Activated CD4-positive, alpha-beta memory T cell treated with anti-CD3 and anti-CD28 coated beads for 36 hours (primary cell): ENCODE measurements at regions of chr7 and their contacts with region 1.

Region 1: DNA sequence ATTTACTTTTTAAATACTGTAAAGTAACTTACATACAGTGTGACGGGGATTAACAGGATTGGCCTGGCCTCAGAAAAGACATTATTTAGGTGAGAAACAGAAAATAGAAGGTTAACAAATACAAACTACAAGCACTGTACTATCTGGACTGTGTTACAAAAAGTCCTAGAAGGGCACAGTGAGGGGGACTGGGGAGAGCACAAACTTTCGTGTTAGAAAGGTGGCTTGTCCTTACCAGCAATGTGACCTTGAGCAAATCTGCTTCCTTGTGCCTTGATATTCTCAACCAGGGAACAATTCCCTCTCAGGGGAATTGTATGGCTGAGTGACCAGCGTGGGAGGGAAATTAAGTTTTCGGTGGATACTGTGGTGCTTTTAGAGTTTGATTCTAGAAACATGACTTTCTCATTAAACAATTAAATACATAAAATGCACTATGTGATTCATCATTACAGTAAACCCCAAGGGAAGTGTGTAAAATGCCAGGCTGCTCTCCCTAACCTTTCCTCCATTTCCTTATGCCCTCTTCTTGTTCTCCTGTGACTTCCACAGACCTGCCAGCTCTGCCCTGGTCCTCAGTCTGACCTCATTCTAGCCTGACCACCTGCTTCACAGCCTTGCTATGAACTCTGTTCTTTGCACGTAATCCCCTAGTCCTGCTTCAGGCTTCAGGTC is 57.7 kb downstream of the OSBPL3 start:
- DNase-seq: no peak
- H3K4me3 Mint-ChIP-seq: no peak overlapping the region
- H3K27ac Mint-ChIP-seq: peak overlapping the region; percentile 85
- H3K4me1 Mint-ChIP-seq: peaks cover 86% of the 10 kb centered on the region
- H3K27me3 Mint-ChIP-seq: no peaks in the 10 kb centered on the region

Region 2: DNA sequence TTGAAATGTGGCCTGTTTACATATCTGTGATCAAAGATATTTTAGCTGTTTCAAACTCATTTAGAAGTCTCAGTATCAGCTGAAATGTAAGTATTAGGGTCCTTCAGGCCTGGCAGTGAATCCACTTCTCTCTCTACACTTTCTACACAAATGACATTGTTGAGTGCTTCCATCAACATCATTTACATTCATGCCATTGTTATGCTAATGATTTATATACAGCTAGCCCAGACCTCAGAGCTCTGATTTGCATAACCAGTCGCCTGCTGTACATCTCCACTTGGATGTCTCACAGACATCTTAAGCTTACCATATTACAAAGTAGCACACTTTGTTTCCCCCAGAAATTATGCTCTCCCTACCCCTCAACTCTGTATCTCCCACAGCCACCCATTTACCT is 236.5 kb before region 1 on chr7:
- CTCF ChIA-PET with region 1: no interaction called
- POLR2A ChIA-PET with region 1: no interaction called
- intact Hi-C with region 1: no loop called
- DNase-seq: no peak
- H3K4me3 Mint-ChIP-seq: no peak overlapping the region
- H3K27ac Mint-ChIP-seq: no peak overlapping the region
- H3K4me1 Mint-ChIP-seq: no peaks in the 10 kb centered on the region
- H3K27me3 Mint-ChIP-seq: no peaks in the 10 kb centered on the region

Region 3: DNA sequence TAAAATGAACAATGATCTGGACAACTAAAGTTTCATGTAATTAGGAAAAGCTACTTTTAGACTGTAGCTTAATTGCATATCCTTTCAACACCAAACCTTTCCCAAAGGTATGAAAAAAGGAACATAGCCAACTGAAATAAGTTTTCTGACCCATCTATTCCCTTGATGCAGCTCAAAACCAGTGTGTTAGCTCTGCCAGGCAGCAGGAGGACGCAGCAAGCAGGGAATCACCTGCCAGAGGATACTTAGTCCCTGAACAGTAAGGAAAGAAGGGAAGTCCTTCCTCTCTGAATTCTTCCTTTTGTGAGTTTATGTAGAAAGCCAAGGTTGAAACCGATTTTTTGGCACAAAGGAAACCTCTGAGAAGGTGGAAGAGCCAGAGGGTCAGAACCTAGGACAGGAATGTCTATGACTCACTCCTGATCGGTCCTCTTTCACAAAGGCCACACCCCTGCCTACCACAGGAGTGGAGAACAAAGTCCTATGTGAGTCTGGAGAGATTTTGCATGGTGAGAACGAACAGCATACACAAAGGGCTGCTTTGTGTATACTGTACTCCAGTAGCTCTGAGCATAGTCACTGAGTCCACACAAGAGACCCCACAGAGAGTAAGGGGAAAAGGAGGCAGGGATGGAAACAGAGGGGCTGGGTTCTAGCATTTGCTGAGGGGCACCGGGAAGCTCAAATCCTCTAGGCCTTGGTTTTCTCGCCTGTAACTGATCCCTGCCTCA is 96.1 kb before region 1 on chr7:
- CTCF ChIA-PET with region 1: interaction called, 5 read pairs
- POLR2A ChIA-PET with region 1: interaction called, 3 read pairs
- intact Hi-C with region 1: loop called (anchors 1 kb)
- DNase-seq: no peak
- H3K4me3 Mint-ChIP-seq: peak overlapping the region; percentile 28
- H3K27ac Mint-ChIP-seq: peak overlapping the region; percentile 43
- H3K4me1 Mint-ChIP-seq: peaks cover 67% of the 10 kb centered on the region
- H3K27me3 Mint-ChIP-seq: no peaks in the 10 kb centered on the region

Region 4: GRCh38 chr7:24842449-24843241 is 79.6 kb before region 1 on chr7:
- CTCF ChIA-PET with region 1: no interaction called
- POLR2A ChIA-PET with region 1: no interaction called
- intact Hi-C with region 1: no loop called
- DNase-seq: no peak
- H3K4me3 Mint-ChIP-seq: no peak overlapping the region
- H3K27ac Mint-ChIP-seq: no peak overlapping the region
- H3K4me1 Mint-ChIP-seq: peaks cover 6% of the 10 kb centered on the region
- H3K27me3 Mint-ChIP-seq: no peaks in the 10 kb centered on the region

Region 5: GRCh38 chr7:24869572-24869971 is 52.7 kb before region 1 on chr7:
- CTCF ChIA-PET with region 1: no interaction called
- POLR2A ChIA-PET with region 1: no interaction called
- intact Hi-C with region 1: loop called (anchors 1 kb)
- DNase-seq: no peak
- H3K4me3 Mint-ChIP-seq: no peak overlapping the region
- H3K27ac Mint-ChIP-seq: no peak overlapping the region
- H3K4me1 Mint-ChIP-seq: peaks cover 39% of the 10 kb centered on the region
- H3K27me3 Mint-ChIP-seq: no peaks in the 10 kb centered on the region

Region 6: GRCh38 chr7:24898691-24899090 is 23.5 kb before region 1 on chr7:
- CTCF ChIA-PET with region 1: no interaction called
- POLR2A ChIA-PET with region 1: no interaction called
- intact Hi-C with region 1: loop called (anchors 1 kb)
- DNase-seq: no peak
- H3K4me3 Mint-ChIP-seq: no peak overlapping the region
- H3K27ac Mint-ChIP-seq: peak overlapping the region; percentile 67
- H3K4me1 Mint-ChIP-seq: peaks cover 79% of the 10 kb centered on the region
- H3K27me3 Mint-ChIP-seq: no peaks in the 10 kb centered on the region

Region 7: GRCh38 chr7:24965831-24966709 is 43.8 kb after region 1 on chr7:
- CTCF ChIA-PET with region 1: no interaction called
- POLR2A ChIA-PET with region 1: interaction called, 4 read pairs
- intact Hi-C with region 1: loop called (anchors 2 kb)
- DNase-seq: peak; percentile 61
- H3K4me3 Mint-ChIP-seq: peak overlapping the region; percentile 36
- H3K27ac Mint-ChIP-seq: peak overlapping the region; percentile 80
- H3K4me1 Mint-ChIP-seq: peaks cover 82% of the 10 kb centered on the region
- H3K27me3 Mint-ChIP-seq: no peaks in the 10 kb centered on the region

Region 8: DNA sequence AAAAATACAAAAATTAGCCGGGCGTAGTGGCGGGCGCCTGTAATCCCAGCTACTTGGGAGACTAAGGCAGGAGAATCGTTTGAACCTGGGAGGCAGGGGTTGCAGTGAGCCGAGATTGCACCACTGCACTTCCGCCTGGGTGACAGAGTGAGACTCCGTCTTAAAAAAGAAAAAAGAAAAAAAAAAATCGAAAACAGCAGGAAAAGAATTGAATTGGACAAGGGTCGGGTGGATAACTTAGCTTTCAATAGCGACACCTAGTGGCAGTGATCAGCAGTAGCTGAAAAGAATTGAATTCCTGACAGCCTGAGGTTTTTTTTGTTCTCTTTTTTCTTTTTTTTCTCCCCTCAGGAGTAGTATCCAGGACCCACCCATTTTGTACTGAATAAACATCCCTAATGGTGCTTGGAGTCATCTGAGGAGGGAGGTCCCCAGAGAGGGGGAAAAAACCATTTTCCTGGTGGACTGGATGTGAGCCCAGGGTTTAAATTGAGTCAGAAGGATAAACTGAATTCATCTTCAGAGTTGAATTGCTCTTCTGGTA is 147.7 kb after region 1 on chr7:
- CTCF ChIA-PET with region 1: interaction called, 4 read pairs
- POLR2A ChIA-PET with region 1: no interaction called
- intact Hi-C with region 1: loop called (anchors 5 kb)
- DNase-seq: peak; percentile 45
- H3K4me3 Mint-ChIP-seq: no peak overlapping the region
- H3K27ac Mint-ChIP-seq: no peak overlapping the region
- H3K4me1 Mint-ChIP-seq: peaks cover 26% of the 10 kb centered on the region
- H3K27me3 Mint-ChIP-seq: no peaks in the 10 kb centered on the region

Region 9: DNA sequence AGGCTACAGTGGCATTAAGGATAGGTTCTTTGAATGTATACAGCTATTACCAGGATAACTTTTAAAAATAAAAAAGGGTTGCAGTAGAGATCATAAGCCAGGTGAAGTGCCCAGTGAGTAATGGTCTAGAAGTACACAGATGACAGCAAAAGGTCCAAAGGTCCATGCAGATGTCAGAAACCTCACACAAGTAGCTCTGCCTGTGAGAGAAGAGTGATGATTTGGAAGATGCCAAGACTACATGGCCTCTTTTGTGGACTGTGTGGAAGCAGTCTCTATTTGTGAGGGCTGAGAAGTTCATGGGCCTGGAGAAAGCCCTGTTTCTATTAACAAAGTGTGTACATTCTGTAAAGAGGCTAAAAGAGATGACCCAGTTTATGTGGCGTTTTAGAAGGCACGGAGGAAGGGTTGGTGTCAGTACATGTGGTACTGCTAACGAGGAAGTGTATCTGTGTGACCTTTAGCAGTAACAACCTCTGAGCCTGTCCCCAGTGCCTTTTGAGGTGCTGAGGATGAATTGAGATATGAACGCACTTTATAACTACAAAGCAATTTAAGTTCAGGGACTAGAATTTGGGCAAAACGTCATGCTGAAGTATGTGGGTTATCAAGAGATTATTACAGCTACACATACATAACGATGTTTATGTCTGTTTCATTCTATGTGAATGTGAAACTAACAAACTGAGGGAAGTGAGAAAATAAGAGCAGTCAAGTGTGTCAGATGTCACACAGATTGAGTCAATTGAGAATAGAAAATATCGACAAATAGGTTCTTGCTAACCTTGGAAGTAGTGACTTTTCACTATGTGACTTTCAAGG is 195.2 kb after region 1 on chr7:
- CTCF ChIA-PET with region 1: no interaction called
- POLR2A ChIA-PET with region 1: no interaction called
- intact Hi-C with region 1: loop called (anchors 5 kb)
- DNase-seq: no peak
- H3K4me3 Mint-ChIP-seq: peak overlapping the region; percentile 16
- H3K27ac Mint-ChIP-seq: peak overlapping the region; percentile 77
- H3K4me1 Mint-ChIP-seq: peaks cover 48% of the 10 kb centered on the region
- H3K27me3 Mint-ChIP-seq: no peaks in the 10 kb centered on the region

Region 10: DNA sequence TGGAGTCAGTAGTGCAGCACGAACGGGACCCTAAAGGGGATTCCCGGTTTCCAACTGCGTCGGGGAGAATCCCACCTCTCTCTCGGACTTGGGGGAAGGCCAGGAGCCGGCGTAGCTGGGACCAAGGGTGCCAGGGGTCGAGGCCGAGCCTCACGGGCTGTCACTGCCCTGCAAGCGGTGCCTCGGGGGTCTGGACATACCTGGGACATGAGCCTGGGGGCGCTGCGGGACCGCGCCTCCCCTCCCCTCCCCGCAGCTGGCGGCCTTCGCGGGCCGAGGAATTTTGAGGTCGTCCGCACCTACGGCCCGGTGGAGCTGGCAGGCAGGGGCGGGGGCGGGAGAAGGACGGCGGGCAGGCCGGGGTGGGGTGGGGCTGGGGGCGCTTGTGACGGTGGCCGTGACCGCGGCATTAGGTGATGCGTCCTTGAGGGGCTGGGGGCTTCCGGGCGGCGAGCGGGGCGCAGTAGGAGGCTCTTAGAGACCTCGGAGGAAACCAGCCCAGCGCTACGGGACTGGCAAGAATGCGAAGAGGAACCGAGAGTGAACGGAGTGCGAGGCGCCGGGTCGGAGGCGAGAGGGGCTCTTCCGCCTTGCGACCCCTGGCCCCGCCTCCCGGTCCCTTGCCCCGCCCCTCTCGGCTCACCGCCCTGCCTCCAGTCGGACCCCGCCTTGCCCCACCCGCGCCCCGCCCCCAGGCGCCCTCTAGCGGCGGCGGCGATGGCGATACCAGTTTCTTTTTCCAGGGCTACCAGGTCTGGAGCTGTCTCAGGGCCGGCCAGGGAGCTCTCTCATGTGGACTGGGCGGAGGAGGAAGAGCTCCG is 257.7 kb after region 1 on chr7:
- CTCF ChIA-PET with region 1: no interaction called
- POLR2A ChIA-PET with region 1: no interaction called
- intact Hi-C with region 1: no loop called
- DNase-seq: peak; percentile 96
- H3K4me3 Mint-ChIP-seq: peak overlapping the region; percentile 79
- H3K27ac Mint-ChIP-seq: peak overlapping the region; percentile 73
- H3K4me1 Mint-ChIP-seq: peaks cover 17% of the 10 kb centered on the region
- H3K27me3 Mint-ChIP-seq: no peaks in the 10 kb centered on the region